Caco-2 (cell line): ENCODE measurements at regions of chr7 and their contacts with region 1.

Region 1: DNA sequence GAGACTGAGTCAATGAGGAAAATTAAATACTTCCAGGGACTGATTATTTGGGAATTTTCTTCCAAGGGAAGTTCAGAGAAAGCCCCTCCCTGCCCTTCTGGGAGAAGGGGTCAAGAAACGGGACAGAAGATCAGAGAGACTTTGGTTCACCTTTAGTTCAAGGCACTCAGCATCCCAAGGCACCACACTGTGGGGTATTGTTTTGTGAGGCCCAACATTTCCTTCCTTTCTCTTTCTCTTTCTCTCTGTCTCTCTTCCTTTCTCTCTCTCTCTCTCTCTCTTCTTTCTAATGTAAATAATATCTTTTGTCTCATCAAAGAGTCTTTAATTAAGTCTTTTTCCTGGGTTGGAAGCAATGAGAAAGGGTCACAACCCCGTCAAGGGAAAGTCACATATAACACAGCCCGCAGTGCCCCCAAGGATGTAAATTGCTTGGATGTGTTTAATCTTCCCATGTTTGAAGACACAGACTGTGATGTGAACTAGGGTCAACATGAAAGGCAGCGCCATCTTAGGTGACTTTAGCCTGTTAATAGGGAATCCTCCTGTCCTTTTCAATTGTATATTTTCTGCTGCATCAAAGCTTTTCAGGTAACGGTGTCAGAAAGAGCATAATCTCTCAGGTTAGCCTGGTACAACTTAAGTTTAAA is 983.3 kb upstream of the C7orf33 start:
- DNase-seq: no peak
- H3K4me3 ChIP-seq: no peak overlapping the region
- H3K4me3 Mint-ChIP-seq: no peak overlapping the region
- H3K27ac Mint-ChIP-seq: no peak overlapping the region
- H3K4me1 ChIP-seq: no peaks in the 10 kb centered on the region
- H3K4me1 Mint-ChIP-seq: no peaks in the 10 kb centered on the region
- H3K27me3 ChIP-seq: no peaks in the 10 kb centered on the region
- H3K27me3 Mint-ChIP-seq: no peaks in the 10 kb centered on the region
- CTCF ChIP-seq: no peak

Region 2: DNA sequence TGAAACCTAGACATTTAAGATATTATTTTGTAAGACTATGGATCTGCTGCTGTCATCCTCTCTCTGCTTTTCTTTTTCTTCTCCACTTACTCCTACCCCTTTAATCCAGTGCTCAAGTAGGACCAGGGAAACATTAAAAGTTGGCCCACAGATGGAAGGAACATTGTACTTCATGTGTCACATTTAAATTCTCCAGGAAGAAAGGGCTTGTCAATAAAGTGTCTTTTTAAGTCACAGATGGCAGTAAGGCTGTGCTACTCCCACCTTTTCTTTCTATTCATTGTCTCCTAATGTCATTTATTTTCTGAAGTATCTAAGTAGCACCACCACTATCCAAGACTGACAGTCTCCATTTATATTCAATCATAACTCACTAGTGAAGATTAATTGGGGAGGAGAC is 245.6 kb after region 1 on chr7:
- CTCF ChIA-PET with region 1: no interaction called
- POLR2A ChIA-PET with region 1: no interaction called
- intact Hi-C with region 1: no loop called
- DNase-seq: no peak
- H3K4me3 ChIP-seq: no peak overlapping the region
- H3K4me3 Mint-ChIP-seq: no peak overlapping the region
- H3K27ac Mint-ChIP-seq: no peak overlapping the region
- H3K4me1 ChIP-seq: no peaks in the 10 kb centered on the region
- H3K4me1 Mint-ChIP-seq: no peaks in the 10 kb centered on the region
- H3K27me3 ChIP-seq: no peaks in the 10 kb centered on the region
- H3K27me3 Mint-ChIP-seq: peaks cover 3% of the 10 kb centered on the region
- CTCF ChIP-seq: no peak

Region 3: GRCh38 chr7:148135116-148135515 is 527.8 kb after region 1 on chr7:
- CTCF ChIA-PET with region 1: no interaction called
- POLR2A ChIA-PET with region 1: interaction called, 12 read pairs
- intact Hi-C with region 1: no loop called
- DNase-seq: no peak
- H3K4me3 ChIP-seq: no peak overlapping the region
- H3K4me3 Mint-ChIP-seq: no peak overlapping the region
- H3K27ac Mint-ChIP-seq: no peak overlapping the region
- H3K4me1 ChIP-seq: no peaks in the 10 kb centered on the region
- H3K4me1 Mint-ChIP-seq: no peaks in the 10 kb centered on the region
- H3K27me3 ChIP-seq: no peaks in the 10 kb centered on the region
- H3K27me3 Mint-ChIP-seq: peaks cover 9% of the 10 kb centered on the region
- CTCF ChIP-seq: no peak